ENCODE measurements at regions of chr11 and their contacts with region 1.

Region 1: GRCh38 chr11:44065841-44066731 is at the start of gene ACCS:
- DNase-seq: peak; percentile 86
- ATAC-seq: peak; percentile 97
- H3K4me3 Mint-ChIP-seq: peak within 1 kb of the TSS; percentile 92
- H3K27ac Mint-ChIP-seq: peak within 1 kb of the TSS; percentile 87
- H3K4me1 Mint-ChIP-seq: peaks cover 19% of the 10 kb centered on the region
- H3K27me3 Mint-ChIP-seq: no peaks in the 10 kb centered on the region
- CTCF ChIP-seq: peak; percentile 58
- total RNA-seq, gene ACCS: 22.4 and 27.0 TPM in 2 replicates

Region 2: GRCh38 chr11:43585877-43586608 is 480.0 kb before region 1 on chr11:
- CTCF ChIA-PET with region 1: no interaction called
- POLR2A ChIA-PET with region 1: no interaction called
- intact Hi-C with region 1: no loop called
- DNase-seq: no peak
- ATAC-seq: no peak
- H3K4me3 Mint-ChIP-seq: no peak overlapping the region
- H3K27ac Mint-ChIP-seq: no peak overlapping the region
- H3K4me1 Mint-ChIP-seq: peaks cover 14% of the 10 kb centered on the region
- H3K27me3 Mint-ChIP-seq: peaks cover 52% of the 10 kb centered on the region
- CTCF ChIP-seq: no peak

Region 3: GRCh38 chr11:43880640-43881159 is 185.4 kb before region 1 on chr11 and contains the start of gene ALKBH3:
- CTCF ChIA-PET with region 1: no interaction called
- POLR2A ChIA-PET with region 1: interaction called, 3 read pairs
- intact Hi-C with region 1: loop called (anchors 1 kb)
- DNase-seq: peak; percentile 83
- ATAC-seq: peak; percentile 99
- H3K4me3 Mint-ChIP-seq: peak within 1 kb of the TSS; percentile 94
- H3K27ac Mint-ChIP-seq: peak within 1 kb of the TSS; percentile 74
- H3K4me1 Mint-ChIP-seq: peaks cover 20% of the 10 kb centered on the region
- H3K27me3 Mint-ChIP-seq: peaks cover 32% of the 10 kb centered on the region
- CTCF ChIP-seq: no peak
- total RNA-seq, gene ALKBH3: 28.3 and 40.5 TPM in 2 replicates

Region 4: DNA sequence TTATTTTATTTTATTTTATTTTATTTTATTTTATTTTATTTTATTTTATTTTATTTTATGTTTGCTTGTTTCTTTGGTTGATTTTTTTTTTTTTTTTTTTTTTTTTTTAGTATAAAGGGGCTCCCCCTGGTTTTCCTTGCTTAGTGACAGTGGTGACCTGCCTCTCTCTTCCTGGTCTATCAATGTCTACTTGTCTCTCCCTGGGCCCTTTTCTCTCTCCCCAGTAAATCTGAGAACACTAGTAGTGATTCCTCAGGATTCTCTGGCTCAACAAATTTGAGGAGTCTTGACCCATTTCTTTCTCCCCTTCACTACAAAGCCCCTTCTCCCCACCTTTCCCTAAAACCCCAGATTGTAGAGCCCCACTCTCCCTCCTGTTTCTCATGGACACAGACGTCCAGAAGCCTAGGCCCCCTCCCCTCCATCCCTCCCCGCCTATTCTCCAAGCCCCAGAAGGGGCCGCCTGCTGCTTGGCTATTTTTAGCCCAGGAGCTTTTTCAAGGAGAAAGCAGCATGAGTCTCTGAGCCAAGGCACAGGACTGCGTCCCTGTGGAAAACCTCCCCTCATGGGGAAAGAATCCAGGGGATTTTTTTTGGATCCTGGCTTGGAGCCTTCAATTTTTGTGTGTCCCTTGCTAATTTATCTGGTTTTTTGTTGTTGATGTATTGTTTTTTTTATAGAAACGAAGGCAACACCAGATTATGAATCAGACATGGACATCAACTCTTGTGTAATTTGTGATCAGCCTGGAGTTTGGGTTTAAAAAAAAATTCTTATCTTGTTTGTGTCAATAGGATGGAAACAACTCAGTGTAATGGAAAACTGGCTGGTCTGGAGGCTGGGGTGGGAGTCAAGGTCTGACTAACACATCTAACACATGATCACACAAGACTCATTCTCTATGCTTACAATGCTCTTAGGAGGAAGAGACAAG is 35.8 kb before region 1 on chr11:
- CTCF ChIA-PET with region 1: no interaction called
- POLR2A ChIA-PET with region 1: no interaction called
- intact Hi-C with region 1: no loop called
- DNase-seq: no peak
- ATAC-seq: no peak
- H3K4me3 Mint-ChIP-seq: no peak overlapping the region
- H3K27ac Mint-ChIP-seq: no peak overlapping the region
- H3K4me1 Mint-ChIP-seq: no peaks in the 10 kb centered on the region
- H3K27me3 Mint-ChIP-seq: peaks cover 29% of the 10 kb centered on the region
- CTCF ChIP-seq: no peak

Region 5: DNA sequence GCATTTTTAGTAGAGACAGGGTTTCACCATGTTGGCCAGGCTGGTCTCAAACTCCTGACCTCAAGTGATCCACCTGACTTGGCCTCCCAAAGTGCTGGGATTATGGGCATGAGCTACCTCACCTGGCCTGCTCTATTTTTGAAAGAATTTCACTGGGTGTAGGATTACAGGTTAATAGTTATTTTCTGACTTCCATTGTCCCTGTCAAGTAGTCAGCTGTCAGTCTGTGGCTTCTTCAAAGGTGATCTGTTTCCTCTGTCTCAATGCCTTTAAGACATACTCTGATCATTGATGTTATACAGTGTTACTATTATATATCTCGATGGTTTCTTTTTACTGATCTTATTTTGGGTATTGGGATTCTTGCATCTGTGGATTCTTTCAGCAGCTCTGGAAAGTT is 19.2 kb after region 1 on chr11:
- CTCF ChIA-PET with region 1: no interaction called
- POLR2A ChIA-PET with region 1: no interaction called
- intact Hi-C with region 1: no loop called
- DNase-seq: no peak
- ATAC-seq: no peak
- H3K4me3 Mint-ChIP-seq: no peak overlapping the region
- H3K27ac Mint-ChIP-seq: no peak overlapping the region
- H3K4me1 Mint-ChIP-seq: no peaks in the 10 kb centered on the region
- H3K27me3 Mint-ChIP-seq: no peaks in the 10 kb centered on the region
- CTCF ChIP-seq: no peak

Region 6: DNA sequence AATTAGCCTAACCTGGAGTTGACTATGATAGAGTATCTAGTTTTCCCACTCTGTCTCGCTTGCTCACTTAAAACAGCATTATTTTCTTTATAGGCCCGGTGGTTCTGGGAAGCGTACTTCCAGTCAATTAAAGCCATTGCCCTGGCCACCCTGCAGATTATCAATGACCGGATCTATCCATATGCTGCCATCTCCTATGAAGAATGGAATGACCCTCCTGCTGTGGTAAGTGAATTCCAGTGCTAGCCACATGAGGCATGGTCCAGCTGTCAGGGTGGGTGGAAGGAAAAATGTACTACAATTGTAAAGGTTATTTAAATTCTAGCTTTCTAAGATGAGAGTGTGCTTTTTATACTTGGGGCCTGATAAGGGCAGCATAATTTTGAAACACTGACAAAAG is 105.4 kb after region 1 on chr11:
- CTCF ChIA-PET with region 1: no interaction called
- POLR2A ChIA-PET with region 1: no interaction called
- intact Hi-C with region 1: no loop called
- DNase-seq: no peak
- ATAC-seq: no peak
- H3K4me3 Mint-ChIP-seq: no peak overlapping the region
- H3K27ac Mint-ChIP-seq: no peak overlapping the region
- H3K4me1 Mint-ChIP-seq: no peaks in the 10 kb centered on the region
- H3K27me3 Mint-ChIP-seq: no peaks in the 10 kb centered on the region
- CTCF ChIP-seq: no peak

Measured in activated B cell treated with CpG ODN at 0.5 μM for 24 hours (primary cell).